B cell (primary cell): ENCODE measurements at regions of chr2 and their contacts with region 1.

Region 1: DNA sequence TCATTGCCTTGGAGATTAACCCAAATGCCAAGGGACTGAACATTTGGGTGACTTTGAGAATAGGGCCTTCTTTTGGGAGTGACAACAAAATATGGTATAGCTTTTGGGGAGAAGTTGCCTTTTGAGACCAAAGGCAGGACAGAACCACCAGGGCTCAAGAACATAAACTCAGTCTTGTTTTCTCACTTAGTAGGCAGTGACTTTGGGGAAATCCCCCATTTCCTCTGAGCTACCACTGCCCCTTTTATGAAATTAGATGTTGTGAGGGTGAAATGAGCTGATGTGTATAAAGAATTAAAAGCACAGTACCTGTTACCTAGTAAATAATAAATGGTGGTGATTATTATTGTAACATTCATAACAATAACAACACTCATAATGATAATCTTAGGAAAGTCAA is 36.5 kb downstream of the GPD2 start:
- DNase-seq: peak; percentile 35
- ATAC-seq: peak; percentile 60
- H3K4me3 ChIP-seq: no peak overlapping the region
- H3K4me3 Mint-ChIP-seq: no peak overlapping the region
- H3K27ac ChIP-seq: no peak overlapping the region
- H3K27ac Mint-ChIP-seq: peak overlapping the region; percentile 16
- H3K4me1 ChIP-seq: peaks cover 22 to 24% of the 10 kb centered on the region in 2 donors
- H3K4me1 Mint-ChIP-seq: peaks cover 45% of the 10 kb centered on the region
- H3K27me3 ChIP-seq: no peaks in the 10 kb centered on the region
- H3K27me3 Mint-ChIP-seq: no peaks in the 10 kb centered on the region
- CTCF ChIP-seq: no peak

Region 2: GRCh38 chr2:156489750-156490465 is 17.2 kb after region 1 on chr2:
- CTCF ChIA-PET with region 1: no interaction called
- POLR2A ChIA-PET with region 1: no interaction called
- intact Hi-C with region 1: loop called (anchors 2 kb)
- DNase-seq: no peak
- ATAC-seq: no peak
- H3K4me3 ChIP-seq: no peak overlapping the region
- H3K4me3 Mint-ChIP-seq: no peak overlapping the region
- H3K27ac ChIP-seq: no peak overlapping the region
- H3K27ac Mint-ChIP-seq: no peak overlapping the region
- H3K4me1 ChIP-seq: no peaks in the 10 kb centered on the region
- H3K4me1 Mint-ChIP-seq: peaks cover 26% of the 10 kb centered on the region
- H3K27me3 ChIP-seq: no peaks in the 10 kb centered on the region
- H3K27me3 Mint-ChIP-seq: no peaks in the 10 kb centered on the region
- CTCF ChIP-seq: no peak